B cell (primary cell): ENCODE measurements at regions of chr9 and their contacts with region 1.

Region 1: GRCh38 chr9:70602321-70603019 is 188.0 kb upstream of the KLF9 start:
- DNase-seq: peak; percentile 72
- ATAC-seq: peak; percentile 53
- H3K4me3 ChIP-seq: no peak overlapping the region
- H3K4me3 Mint-ChIP-seq: no peak overlapping the region
- H3K27ac ChIP-seq: no peak overlapping the region
- H3K27ac Mint-ChIP-seq: no peak overlapping the region
- H3K4me1 ChIP-seq: peaks cover 2% of the 10 kb centered on the region in 2 donors
- H3K4me1 Mint-ChIP-seq: peaks cover 7% of the 10 kb centered on the region
- H3K27me3 ChIP-seq: no peaks in the 10 kb centered on the region
- H3K27me3 Mint-ChIP-seq: peaks cover 4% of the 10 kb centered on the region
- CTCF ChIP-seq: peak; percentile 86

Region 2: GRCh38 chr9:69971643-69972449 is 630.6 kb before region 1 on chr9:
- CTCF ChIA-PET with region 1: interaction called, 48 read pairs
- POLR2A ChIA-PET with region 1: no interaction called
- intact Hi-C with region 1: no loop called
- DNase-seq: peak; percentile 52
- ATAC-seq: no peak
- H3K4me3 ChIP-seq: no peak overlapping the region
- H3K4me3 Mint-ChIP-seq: no peak overlapping the region
- H3K27ac ChIP-seq: no peak overlapping the region
- H3K27ac Mint-ChIP-seq: no peak overlapping the region
- H3K4me1 ChIP-seq: no peaks in the 10 kb centered on the region
- H3K4me1 Mint-ChIP-seq: no peaks in the 10 kb centered on the region
- H3K27me3 ChIP-seq: peaks cover 0 to 4% (median 0%) of the 10 kb centered on the region in 4 experiments
- H3K27me3 Mint-ChIP-seq: peaks cover 12% of the 10 kb centered on the region
- CTCF ChIP-seq: peak; percentile 74

Region 3: DNA sequence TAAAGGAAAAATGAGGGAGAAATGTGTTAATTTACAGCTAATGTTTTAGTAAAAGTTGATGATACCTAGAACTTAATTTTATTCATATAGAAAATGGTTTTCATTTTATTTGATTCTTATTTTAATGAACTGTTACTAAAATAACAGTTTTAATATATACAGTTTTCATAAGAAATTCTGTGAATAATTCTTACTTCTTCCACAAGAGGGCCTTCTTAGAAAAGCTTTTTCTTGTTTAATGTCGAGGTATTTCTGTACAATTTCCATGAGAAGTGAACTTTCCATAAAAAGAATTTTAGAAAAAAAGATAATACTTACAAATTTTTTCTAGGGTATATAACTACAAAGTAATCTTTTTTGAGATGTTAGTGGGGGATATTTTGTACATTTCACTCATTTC is 261.9 kb before region 1 on chr9:
- CTCF ChIA-PET with region 1: interaction called, 80 read pairs
- POLR2A ChIA-PET with region 1: no interaction called
- intact Hi-C with region 1: loop called (anchors 1 kb)
- DNase-seq: peak; percentile 32
- ATAC-seq: no peak
- H3K4me3 ChIP-seq: no peak overlapping the region
- H3K4me3 Mint-ChIP-seq: no peak overlapping the region
- H3K27ac ChIP-seq: no peak overlapping the region
- H3K27ac Mint-ChIP-seq: no peak overlapping the region
- H3K4me1 ChIP-seq: no peaks in the 10 kb centered on the region
- H3K4me1 Mint-ChIP-seq: no peaks in the 10 kb centered on the region
- H3K27me3 ChIP-seq: no peaks in the 10 kb centered on the region
- H3K27me3 Mint-ChIP-seq: no peaks in the 10 kb centered on the region
- CTCF ChIP-seq: peak; percentile 78

Region 4: DNA sequence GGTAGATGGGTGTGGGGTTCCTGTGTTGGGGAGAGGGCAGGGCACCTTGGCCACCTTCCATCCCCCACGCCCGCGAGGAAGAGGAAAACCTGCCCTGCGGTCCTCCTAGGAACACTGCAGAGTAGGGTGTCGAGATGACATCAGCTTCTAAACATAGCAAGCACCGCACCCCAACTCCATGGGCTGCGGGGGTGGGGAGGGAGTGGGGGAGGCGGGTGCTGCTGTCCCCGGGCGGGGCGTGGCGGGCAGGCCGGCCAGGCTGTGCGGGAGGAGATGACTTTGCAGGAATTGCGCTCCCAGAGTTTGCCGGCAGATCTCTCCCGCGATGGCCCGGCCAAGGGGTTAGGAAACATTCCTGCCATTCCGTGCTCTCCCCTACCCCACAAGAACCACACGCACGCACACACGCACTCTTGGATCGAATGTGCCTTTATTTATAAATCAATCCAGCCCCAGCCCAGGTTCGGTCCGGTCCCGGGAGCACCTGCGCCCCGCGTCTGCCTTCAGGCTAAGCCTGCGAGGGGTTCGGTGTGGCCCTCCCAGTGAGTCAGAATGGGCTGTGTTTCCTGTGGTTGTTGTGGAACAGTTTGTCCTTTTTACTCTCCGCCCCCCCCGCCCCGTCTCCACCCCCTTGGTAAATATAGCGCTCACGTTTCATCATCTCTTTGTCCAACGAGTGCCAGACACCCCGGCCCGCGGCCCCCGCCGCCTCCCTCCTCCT is 182.8 kb before region 1 on chr9:
- CTCF ChIA-PET with region 1: interaction called, 12 read pairs
- POLR2A ChIA-PET with region 1: interaction called, 8 read pairs
- intact Hi-C with region 1: loop called (anchors 2 kb)
- DNase-seq: peak; percentile 89
- ATAC-seq: peak; percentile 51
- H3K4me3 ChIP-seq: peak overlapping the region; percentile 38 to 89 (median 77)
- H3K4me3 Mint-ChIP-seq: peak overlapping the region; percentile 96
- H3K27ac ChIP-seq: peak overlapping the region; percentile 94 to 99
- H3K27ac Mint-ChIP-seq: peak overlapping the region; percentile 100
- H3K4me1 ChIP-seq: peaks cover 21 to 36% of the 10 kb centered on the region in 2 donors
- H3K4me1 Mint-ChIP-seq: peaks cover 43% of the 10 kb centered on the region
- H3K27me3 ChIP-seq: no peaks in the 10 kb centered on the region
- H3K27me3 Mint-ChIP-seq: no peaks in the 10 kb centered on the region
- CTCF ChIP-seq: no peak

Region 5: DNA sequence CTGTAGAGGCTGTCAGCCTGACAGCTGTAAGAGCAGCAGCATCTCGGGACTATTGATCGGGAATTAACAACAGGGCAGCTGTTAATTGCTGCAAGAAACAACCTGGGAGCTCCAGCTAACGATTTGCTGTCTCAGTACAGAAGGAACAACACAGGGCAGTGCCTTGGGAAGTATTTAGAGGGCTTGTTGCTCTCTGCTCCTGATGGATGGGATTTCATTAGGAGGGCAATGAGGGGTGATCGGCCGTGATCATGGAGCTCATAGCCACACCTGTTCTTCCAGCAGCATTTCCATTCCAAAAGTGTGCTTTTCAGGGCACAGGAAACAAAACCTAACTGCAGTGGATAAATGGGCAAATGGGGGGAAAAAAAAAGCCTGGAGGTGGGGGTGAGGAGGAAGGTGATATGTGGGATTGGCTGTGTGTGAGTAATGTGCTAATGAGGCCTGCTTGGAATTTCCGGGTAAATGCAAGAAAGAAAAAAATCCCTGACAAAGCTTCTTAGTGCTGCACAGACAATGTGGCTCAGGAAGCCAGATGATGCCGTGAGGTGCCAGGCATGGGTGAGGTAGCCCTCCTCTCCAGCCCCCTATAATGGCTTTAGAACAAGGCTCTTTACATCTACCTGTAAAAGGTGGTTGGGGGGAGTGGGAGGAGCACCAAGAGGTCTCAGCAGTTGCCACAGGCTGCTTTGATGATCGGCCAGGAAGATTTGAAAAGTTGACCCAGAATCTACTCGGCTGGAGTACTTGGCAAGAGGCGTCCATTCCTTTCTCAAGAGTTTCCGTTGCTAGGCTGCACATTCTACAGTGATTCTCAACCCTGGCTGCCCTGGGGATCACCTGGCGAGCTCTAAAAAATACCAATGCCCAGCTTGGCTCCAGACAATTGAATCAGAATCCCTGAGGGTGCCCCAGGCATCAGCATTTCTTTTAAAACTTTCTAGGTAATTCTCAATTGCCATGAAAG is 48.5 kb before region 1 on chr9:
- CTCF ChIA-PET with region 1: interaction called, 3 read pairs
- POLR2A ChIA-PET with region 1: no interaction called
- intact Hi-C with region 1: loop called (anchors 10 kb)
- DNase-seq: no peak
- ATAC-seq: no peak
- H3K4me3 ChIP-seq: no peak overlapping the region
- H3K4me3 Mint-ChIP-seq: no peak overlapping the region
- H3K27ac ChIP-seq: no peak overlapping the region
- H3K27ac Mint-ChIP-seq: no peak overlapping the region
- H3K4me1 ChIP-seq: peaks cover 7 to 13% of the 10 kb centered on the region in 2 donors
- H3K4me1 Mint-ChIP-seq: peaks cover 9% of the 10 kb centered on the region
- H3K27me3 ChIP-seq: no peaks in the 10 kb centered on the region
- H3K27me3 Mint-ChIP-seq: no peaks in the 10 kb centered on the region
- CTCF ChIP-seq: no peak

Region 6: GRCh38 chr9:70656281-70656680 is 53.8 kb after region 1 on chr9:
- CTCF ChIA-PET with region 1: no interaction called
- POLR2A ChIA-PET with region 1: no interaction called
- intact Hi-C with region 1: no loop called
- DNase-seq: no peak
- ATAC-seq: no peak
- H3K4me3 ChIP-seq: no peak overlapping the region
- H3K4me3 Mint-ChIP-seq: no peak overlapping the region
- H3K27ac ChIP-seq: no peak overlapping the region
- H3K27ac Mint-ChIP-seq: no peak overlapping the region
- H3K4me1 ChIP-seq: no peaks in the 10 kb centered on the region
- H3K4me1 Mint-ChIP-seq: no peaks in the 10 kb centered on the region
- H3K27me3 ChIP-seq: peaks cover 0 to 4% (median 2%) of the 10 kb centered on the region in 4 experiments
- H3K27me3 Mint-ChIP-seq: peaks cover 11% of the 10 kb centered on the region
- CTCF ChIP-seq: no peak

Region 7: GRCh38 chr9:70829591-70830265 is 227.3 kb after region 1 on chr9:
- CTCF ChIA-PET with region 1: no interaction called
- POLR2A ChIA-PET with region 1: no interaction called
- intact Hi-C with region 1: no loop called
- DNase-seq: no peak
- ATAC-seq: no peak
- H3K4me3 ChIP-seq: no peak overlapping the region
- H3K4me3 Mint-ChIP-seq: no peak overlapping the region
- H3K27ac ChIP-seq: no peak overlapping the region
- H3K27ac Mint-ChIP-seq: no peak overlapping the region
- H3K4me1 ChIP-seq: no peaks in the 10 kb centered on the region
- H3K4me1 Mint-ChIP-seq: no peaks in the 10 kb centered on the region
- H3K27me3 ChIP-seq: no peaks in the 10 kb centered on the region
- H3K27me3 Mint-ChIP-seq: peaks cover 3% of the 10 kb centered on the region
- CTCF ChIP-seq: no peak